GM12878 (cell line): ENCODE measurements at regions of chr10 and their contacts with region 1.

Region 1: GRCh38 chr10:28302638-28303488 is at the start of gene MPP7:
- DNase-seq: peak; percentile 78
- ATAC-seq: peak; percentile 100
- H3K4me3 ChIP-seq: peak within 1 kb of the TSS; percentile 72; the same call in 1 of the 2 replicates
- H3K27ac ChIP-seq: no peak within 1 kb of the TSS
- H3K4me1 ChIP-seq: no peaks in the 10 kb centered on the region
- H3K27me3 ChIP-seq: peaks cover 0 to 5% of the 10 kb centered on the region in 2 experiments; a peak in 1 of 4 replicates
- CTCF ChIP-seq: peak in 2 of 3 experiments; percentile 22 to 38; a peak in 3 of 6 replicates
- EP300 ChIP-seq: no peak
- POLR2A ChIP-seq: no peak
- RAD21 ChIP-seq: 0 out of 2 replicates have a peak, but pooled peaks have one; percentile 20
- polyA plus RNA-seq, gene MPP7: 0.04 TPM in 1 of 2 experiments, not detected in the other

Region 2: GRCh38 chr10:28250782-28251181 is 52.1 kb before region 1 on chr10:
- CTCF ChIA-PET with region 1: interaction called, 3 read pairs
- POLR2A ChIA-PET with region 1: no interaction called
- RAD21 ChIA-PET with region 1: interaction called, 3 read pairs
- SMC1A ChIA-PET with region 1: interaction called, 3 read pairs
- in situ Hi-C with region 1: no loop called
- intact Hi-C with region 1: loop called (anchors 1 kb)
- DNase-seq: no peak
- ATAC-seq: peak; percentile 32; the same call in 1 of the 3 replicates
- H3K4me3 ChIP-seq: no peak overlapping the region
- H3K27ac ChIP-seq: no peak overlapping the region
- H3K4me1 ChIP-seq: no peaks in the 10 kb centered on the region
- H3K27me3 ChIP-seq: no peaks in the 10 kb centered on the region; a peak in 1 of 4 replicates
- CTCF ChIP-seq: peak in 2 of 3 experiments; percentile 43 to 52; a peak in 3 of 6 replicates
- EP300 ChIP-seq: no peak
- POLR2A ChIP-seq: no peak
- RAD21 ChIP-seq: peak; percentile 60

Region 3: GRCh38 chr10:28266449-28267224 is 36.2 kb before region 1 on chr10:
- CTCF ChIA-PET with region 1: no interaction called
- POLR2A ChIA-PET with region 1: no interaction called
- RAD21 ChIA-PET with region 1: no interaction called
- SMC1A ChIA-PET with region 1: no interaction called
- in situ Hi-C with region 1: no loop called
- intact Hi-C with region 1: no loop called
- DNase-seq: no peak
- ATAC-seq: no peak
- H3K4me3 ChIP-seq: no peak overlapping the region
- H3K27ac ChIP-seq: no peak overlapping the region
- H3K4me1 ChIP-seq: no peaks in the 10 kb centered on the region
- H3K27me3 ChIP-seq: no peaks in the 10 kb centered on the region
- CTCF ChIP-seq: no peak
- EP300 ChIP-seq: no peak
- POLR2A ChIP-seq: no peak
- RAD21 ChIP-seq: no peak

Region 4: GRCh38 chr10:28334296-28334695 is 31.4 kb after region 1 on chr10:
- CTCF ChIA-PET with region 1: interaction called, 5 read pairs
- POLR2A ChIA-PET with region 1: no interaction called
- RAD21 ChIA-PET with region 1: interaction called, 6 read pairs
- SMC1A ChIA-PET with region 1: interaction called, 4 read pairs
- in situ Hi-C with region 1: no loop called
- intact Hi-C with region 1: loop called (anchors 2 kb)
- DNase-seq: peak; percentile 63
- ATAC-seq: peak; percentile 87
- H3K4me3 ChIP-seq: no peak overlapping the region
- H3K27ac ChIP-seq: peak overlapping the region; percentile 34; the same call in 1 of the 2 replicates
- H3K4me1 ChIP-seq: peaks cover 8% of the 10 kb centered on the region; the same call in 1 of the 2 replicates
- H3K27me3 ChIP-seq: no peaks in the 10 kb centered on the region
- CTCF ChIP-seq: no peak
- EP300 ChIP-seq: peak; percentile 38 to 83; a peak in 3 of 4 replicates
- POLR2A ChIP-seq: no peak
- RAD21 ChIP-seq: no peak

Region 5: GRCh38 chr10:28367929-28368484 is 65.1 kb after region 1 on chr10:
- CTCF ChIA-PET with region 1: interaction called, 16 read pairs
- POLR2A ChIA-PET with region 1: no interaction called
- RAD21 ChIA-PET with region 1: interaction called, 5 read pairs
- SMC1A ChIA-PET with region 1: interaction called, 8 read pairs
- in situ Hi-C with region 1: no loop called
- intact Hi-C with region 1: loop called (anchors 5 kb)
- DNase-seq: peak; percentile 68
- ATAC-seq: peak; percentile 99
- H3K4me3 ChIP-seq: no peak overlapping the region
- H3K27ac ChIP-seq: no peak overlapping the region
- H3K4me1 ChIP-seq: peaks cover 7% of the 10 kb centered on the region
- H3K27me3 ChIP-seq: no peaks in the 10 kb centered on the region
- CTCF ChIP-seq: no peak
- EP300 ChIP-seq: no peak
- POLR2A ChIP-seq: no peak
- RAD21 ChIP-seq: 0 out of 2 replicates have a peak, but pooled peaks have one; percentile 1